GM13977 (cell line): ENCODE measurements at regions of chr13 and their contacts with region 1.

Region 1: GRCh38 chr13:111202745-111203144 is 87.6 kb downstream of the ARHGEF7 start:
- DNase-seq: peak; percentile 79
- CTCF ChIP-seq: no peak

Region 2: DNA sequence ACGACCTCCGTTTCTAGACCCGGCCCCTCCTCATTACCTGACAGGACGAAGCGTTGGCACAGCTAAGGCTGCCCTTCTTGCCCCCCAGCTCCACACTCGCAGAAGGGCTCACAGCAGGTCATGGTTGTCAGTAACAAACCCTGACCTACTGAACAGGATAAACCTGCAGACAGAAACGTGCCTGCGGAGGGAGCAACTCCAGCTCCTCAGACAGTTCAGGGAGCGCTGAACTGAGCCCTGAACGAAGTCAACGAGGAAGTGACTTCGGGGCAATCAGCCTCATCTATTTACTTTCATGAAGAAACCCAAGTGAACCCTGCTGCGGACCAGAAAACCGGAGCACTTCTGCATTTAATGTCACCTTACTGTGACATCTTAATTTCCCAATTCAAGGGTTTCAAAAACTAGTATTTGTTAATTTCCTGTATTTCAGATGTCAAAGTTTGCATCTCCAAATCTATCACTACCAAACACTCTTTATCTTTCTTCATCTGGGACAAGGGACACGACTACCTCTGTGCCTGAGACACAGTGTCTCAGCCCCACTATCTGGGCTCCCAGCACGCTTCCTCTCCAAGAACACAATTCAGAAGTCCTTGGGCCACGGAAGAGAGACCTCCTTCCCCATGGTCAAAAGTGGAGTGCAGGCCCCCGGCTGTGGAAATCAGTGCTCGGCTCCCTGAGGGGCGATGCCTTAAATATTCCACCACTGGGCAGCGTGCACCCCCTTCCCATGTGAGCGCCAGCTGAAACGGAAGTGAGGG is 537.1 kb before region 1 on chr13:
- in situ Hi-C with region 1: no loop called
- DNase-seq: no peak
- CTCF ChIP-seq: no peak

Region 3: DNA sequence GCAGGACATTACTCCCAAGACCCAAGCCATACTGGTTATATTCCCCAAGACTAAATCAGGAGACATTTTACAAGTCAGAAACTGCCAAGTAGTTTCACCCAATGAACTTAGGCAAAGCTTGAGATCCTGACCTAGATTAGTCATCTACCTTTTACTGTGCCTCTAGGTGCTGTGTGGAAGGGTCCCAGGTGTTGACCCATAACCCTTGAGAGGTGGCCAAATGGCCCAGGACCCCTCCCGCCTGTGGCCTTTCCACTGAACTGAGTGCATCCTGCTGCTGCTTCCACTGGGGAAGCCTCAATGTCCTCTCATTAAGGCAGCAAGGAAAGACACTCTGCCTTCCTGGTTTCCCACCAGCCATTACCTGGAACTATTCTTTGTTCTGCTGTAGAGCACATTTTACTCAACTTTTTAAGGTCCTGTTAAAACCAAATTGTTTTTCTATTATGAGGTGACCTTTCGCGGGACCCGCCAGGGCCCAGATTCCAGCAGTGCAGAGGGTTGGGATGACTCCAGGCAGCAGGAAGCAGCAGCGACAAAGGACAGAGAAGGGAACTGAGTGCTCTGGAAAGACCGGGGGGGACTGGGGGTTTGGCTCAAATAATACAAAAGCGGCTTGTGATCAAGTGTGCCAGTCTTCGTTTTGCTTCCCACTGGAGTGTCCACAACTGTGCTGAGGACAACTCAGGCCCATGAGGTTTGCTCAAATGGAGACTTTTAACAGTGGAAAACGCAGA is 315.0 kb before region 1 on chr13:
- in situ Hi-C with region 1: no loop called
- DNase-seq: no peak
- CTCF ChIP-seq: no peak

Region 4: DNA sequence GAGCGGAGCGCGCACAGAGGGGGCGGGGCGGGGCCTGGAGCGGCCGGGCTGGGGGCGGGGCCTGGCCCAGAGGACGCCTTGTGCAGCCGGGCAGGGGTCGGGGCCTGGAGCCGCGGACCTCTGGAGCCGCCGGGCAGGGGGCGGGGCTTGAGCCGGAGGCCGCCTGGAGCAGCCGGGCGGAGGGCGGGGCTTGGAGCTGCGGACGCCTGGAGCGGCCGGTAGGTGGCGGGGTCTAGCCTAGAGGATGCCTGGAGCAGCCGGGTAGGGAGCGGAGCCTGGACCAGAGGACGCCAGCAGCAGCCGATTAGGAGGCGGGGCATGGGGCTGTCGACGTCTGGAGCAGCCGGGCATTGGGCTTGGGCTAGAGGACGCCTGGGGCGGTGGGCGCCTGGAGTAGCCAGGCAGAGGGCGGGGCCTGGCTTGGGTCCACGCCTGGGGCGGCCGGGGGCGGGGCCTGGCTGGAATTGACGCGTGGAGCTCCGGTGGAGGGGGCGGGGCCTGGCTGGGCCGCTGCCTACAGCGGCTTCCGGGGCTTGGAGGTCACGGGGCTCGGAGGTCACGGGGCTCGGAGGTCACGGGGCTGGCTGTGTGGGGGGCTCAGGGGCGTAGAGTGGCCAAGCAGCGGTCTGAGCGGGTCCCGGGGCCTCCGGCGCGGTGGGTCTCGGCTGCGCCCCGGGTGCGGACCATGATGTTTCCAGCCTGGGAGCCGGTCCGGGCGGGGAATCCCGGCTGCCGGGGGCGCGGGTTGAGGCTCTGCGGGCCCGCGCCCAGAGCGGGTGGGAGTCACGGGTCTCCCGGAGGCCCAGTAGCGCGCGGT is 287.5 kb before region 1 on chr13 and contains the start of gene ANKRD10:
- in situ Hi-C with region 1: loop called (anchors 25 kb)
- DNase-seq: peak; percentile 100
- CTCF ChIP-seq: peak; percentile 85

Region 5: GRCh38 chr13:112102243-112102642 is 899.5 kb after region 1 on chr13:
- in situ Hi-C with region 1: no loop called
- DNase-seq: no peak
- CTCF ChIP-seq: no peak

Region 6: DNA sequence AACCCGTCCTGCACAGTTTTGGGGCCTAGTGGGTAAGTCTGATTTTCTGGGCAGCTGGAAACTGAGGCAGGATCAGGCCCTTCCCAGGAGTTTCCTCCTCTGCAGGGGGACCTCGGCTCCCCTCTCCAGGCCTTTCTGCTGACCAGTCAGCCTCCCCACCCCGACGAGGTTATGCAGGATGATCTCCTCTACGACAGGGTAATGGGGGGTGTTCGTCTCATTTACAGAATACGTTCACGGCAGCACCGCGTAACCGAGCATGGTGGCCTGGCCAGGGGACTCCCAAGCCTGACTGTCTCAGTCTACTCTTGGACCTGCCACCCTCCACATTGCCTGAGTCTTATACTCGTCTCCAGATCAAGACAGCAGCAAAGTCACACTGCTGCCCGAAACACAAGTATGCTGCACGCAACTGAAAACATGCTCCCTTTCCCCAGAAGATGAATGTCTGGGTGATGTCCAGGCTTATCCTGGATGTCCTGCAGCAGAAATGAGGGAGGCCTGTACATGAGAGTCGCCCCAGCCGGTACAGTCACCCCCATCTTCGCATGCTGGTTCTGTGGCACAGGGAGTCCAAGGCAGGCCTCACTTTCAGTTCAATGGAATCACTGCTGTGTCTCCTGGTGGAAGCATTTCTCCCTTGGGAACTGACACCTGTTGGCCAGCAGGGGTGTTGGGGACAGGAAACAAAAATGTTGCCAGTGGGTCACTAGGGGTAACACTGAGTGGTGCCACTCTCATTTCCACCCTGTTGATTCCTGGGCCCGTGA is 985.0 kb after region 1 on chr13:
- in situ Hi-C with region 1: no loop called
- DNase-seq: no peak
- CTCF ChIP-seq: no peak